ENCODE measurements at regions of chr18 and their contacts with region 1.

Region 1: GRCh38 chr18:12947355-12948041 is at the start of gene SEH1L:
- DNase-seq: peak; percentile 95 to 100
- H3K4me3 ChIP-seq: peak within 1 kb of the TSS; percentile 71
- H3K4me1 ChIP-seq: peaks cover 19% of the 10 kb centered on the region
- H3K27me3 ChIP-seq: no peaks in the 10 kb centered on the region

Region 2: DNA sequence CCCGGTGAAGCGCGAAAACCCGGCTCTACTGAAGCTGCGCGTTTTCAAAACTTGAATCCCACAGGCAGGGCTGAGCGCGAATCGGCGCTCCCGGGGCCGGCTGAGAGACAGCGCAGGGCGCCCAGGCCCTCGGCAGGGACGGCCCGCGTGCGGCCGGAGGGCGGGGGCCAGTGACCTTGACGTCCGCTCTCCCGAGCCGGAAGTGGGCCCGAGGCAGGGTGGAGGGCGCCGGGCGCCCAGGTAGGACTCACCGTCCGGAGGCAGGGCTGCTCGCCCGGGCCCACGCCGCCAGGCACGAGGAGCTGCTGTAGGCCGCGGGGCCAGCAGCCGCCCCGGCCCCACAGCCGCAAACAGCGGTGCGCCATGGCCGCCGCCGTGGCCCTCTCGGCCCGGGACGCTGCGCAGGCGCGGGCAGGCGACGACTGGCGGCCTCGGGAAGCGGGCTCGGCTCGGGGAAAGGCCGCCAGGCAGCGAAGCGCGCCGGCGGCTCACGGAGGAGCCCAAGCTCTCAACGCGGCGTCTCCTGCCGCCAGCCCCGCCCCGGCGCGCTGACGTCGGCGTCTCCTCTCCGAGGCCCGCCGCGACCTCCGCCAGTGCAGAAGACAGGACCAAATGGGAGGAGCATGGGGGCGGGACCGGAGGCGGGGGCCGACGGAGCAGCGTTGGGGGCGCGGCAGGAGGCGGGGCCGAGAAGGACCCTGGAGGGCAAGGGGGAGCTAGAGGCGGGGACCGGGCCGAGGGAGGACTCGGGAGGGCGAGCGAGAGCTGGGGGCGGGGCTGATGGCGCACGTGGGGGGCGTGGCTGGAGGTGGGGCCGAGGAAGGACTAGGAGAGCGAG is 570.6 kb before region 1 on chr18 and contains the start of gene AFG3L2:
- in situ Hi-C with region 1: loop called (anchors 25 kb)
- DNase-seq: peak; percentile 94 to 100
- H3K4me3 ChIP-seq: peak within 1 kb of the TSS; percentile 62
- H3K4me1 ChIP-seq: peaks cover 9% of the 10 kb centered on the region
- H3K27me3 ChIP-seq: no peaks in the 10 kb centered on the region